ENCODE measurements at regions of chr3 and their contacts with region 1.

Region 1: DNA sequence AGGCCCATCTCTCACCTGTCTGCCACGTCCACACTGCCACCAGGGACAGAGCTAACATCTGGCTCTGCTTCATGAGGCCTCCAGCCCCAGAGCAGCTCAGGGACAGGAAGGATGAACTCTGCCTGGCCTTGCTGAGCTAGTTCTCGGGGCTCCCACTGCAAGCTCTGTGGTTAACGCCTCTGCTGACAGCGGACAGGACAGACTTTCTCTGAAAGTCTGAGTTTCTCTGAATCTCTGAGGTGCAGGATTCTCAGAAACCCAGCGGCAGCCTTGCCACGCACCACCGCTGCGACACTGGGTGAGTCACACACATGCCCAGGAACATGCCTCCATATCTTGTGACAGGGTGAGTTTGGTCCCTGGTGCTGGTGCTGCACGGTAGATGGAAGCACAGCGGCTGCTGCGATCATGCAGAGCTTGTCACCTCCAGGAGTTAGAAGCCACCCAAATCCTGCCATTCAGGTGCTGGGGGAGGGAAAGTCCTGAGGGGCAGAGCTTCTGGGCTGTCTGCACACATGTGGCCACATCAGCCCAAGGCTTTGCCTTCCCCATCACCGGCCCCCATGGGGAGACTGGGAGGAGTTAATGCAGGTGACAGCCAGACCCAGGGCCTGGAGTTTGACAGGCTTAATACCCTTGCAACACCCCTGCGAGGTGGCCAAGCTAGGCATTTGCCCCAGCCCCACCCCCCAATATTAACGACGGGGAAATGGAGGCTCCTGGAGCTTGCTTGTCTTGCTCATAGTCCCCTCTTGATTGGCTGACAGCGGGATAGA is 267.0 kb downstream of the PLCL2 start:
- DNase-seq: peak; percentile 91
- H3K4me3 Mint-ChIP-seq: peak overlapping the region; percentile 49
- H3K27ac Mint-ChIP-seq: peak overlapping the region; percentile 91
- H3K4me1 Mint-ChIP-seq: peaks cover 66% of the 10 kb centered on the region
- H3K27me3 Mint-ChIP-seq: no peaks in the 10 kb centered on the region

Region 2: DNA sequence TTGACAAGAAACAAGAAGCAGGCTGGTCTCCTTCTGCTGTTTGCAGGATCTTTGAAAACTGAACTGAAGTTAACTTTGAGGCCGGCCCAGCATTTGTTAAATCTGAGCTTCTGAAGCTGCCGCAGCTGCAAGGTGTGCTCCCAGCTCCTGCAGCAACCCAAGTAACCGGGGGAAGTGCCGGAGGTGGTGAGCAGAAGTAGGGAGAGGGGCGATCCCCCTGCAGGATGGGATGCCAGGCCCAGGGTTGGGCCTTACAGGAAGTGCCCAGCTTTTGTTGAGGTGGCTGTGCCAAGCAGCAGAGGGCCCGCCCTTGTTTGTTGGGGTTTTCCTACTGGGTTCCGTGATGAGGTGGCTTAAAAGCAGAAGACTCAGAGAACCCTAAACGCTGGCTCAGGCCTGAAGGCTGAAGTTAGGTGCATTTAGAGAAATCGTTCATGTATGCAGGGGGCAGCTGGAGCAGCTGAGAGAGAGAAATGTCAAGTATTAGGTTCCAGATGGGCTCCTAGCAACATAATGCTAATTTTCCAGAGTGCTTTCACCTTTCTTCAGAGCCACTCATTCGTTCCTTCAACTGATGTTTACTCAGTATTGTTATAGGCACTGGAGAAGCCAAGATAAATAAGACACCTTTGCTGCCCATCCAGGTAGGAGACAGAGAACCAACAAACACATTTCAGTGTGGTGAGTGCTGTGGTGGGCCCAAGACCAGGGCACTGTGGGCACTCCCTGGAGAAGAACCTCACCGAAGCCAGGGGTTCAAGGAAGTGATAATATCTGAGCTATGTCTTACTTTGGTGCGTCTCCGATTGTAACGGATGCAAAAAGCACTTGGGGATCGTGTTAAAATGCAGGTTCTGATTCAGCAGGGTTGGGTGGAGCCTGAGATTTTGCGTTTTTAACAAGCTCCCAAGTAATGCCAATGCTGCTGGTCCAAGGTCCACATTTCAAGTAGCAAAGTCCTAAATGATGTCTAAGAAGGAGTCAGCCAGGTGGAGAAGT is 309.2 kb before region 1 on chr3:
- intact Hi-C with region 1: loop called (anchors 5 kb)
- DNase-seq: peak; percentile 71
- H3K4me3 Mint-ChIP-seq: peak overlapping the region; percentile 75
- H3K27ac Mint-ChIP-seq: peak overlapping the region; percentile 94
- H3K4me1 Mint-ChIP-seq: peaks cover 60% of the 10 kb centered on the region
- H3K27me3 Mint-ChIP-seq: peaks cover 4% of the 10 kb centered on the region

Region 3: DNA sequence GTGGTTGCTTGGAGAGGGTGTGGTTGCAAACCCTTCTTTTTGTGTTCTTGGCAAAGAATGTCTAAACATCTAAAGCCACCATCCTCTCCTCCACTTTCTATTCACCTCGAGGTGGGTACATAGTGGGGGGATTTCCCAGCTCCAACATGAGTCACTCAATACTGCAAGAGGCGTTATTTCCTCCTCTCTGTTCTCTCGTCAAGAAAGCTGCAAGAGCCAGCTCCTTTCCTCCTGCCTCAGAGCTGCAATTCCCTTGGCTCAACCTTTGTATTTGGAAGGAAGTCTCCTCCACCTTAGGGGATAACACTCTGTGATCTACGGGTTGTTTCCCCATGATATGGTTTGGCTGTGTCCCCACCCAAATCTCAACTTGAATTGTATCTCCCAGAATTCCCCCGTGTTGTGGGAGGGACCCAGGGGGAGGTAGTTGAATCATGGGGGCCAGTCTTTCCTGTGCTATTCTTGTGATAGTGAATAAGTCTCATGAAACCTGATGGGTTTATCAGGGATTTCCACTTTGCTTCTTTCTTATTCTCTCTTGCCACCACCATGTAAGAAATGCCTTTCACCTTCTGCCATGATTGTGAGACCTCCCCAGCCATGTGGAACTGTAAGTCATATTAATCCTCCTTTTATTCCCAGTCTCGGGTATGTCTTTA is 128.7 kb before region 1 on chr3:
- intact Hi-C with region 1: loop called (anchors 5 kb)
- DNase-seq: peak; percentile 24
- H3K4me3 Mint-ChIP-seq: peak overlapping the region; percentile 56
- H3K27ac Mint-ChIP-seq: peak overlapping the region; percentile 73
- H3K4me1 Mint-ChIP-seq: peaks cover 51% of the 10 kb centered on the region
- H3K27me3 Mint-ChIP-seq: no peaks in the 10 kb centered on the region

Region 4: DNA sequence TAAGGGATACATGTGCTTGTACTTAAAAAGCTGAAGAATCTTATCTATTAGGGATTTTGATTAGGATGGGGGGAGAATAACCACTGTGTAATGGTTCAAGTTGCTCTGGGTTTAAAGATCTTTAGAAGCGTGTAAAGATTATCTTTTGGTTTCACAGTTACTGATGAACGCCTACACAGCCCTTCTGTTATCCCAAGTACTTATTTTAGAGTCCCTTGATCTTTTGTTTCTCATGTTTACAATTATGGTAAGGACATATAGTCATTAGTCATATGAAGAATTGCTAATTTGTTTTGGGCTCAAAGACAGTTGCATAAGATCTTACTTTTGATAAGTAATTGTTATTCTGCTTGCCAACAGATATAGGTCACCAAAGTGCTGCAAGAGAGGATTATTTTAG is 106.9 kb before region 1 on chr3:
- intact Hi-C with region 1: loop called (anchors 1 kb)
- DNase-seq: no peak
- H3K4me3 Mint-ChIP-seq: no peak overlapping the region
- H3K27ac Mint-ChIP-seq: peak overlapping the region; percentile 20
- H3K4me1 Mint-ChIP-seq: peaks cover 54% of the 10 kb centered on the region
- H3K27me3 Mint-ChIP-seq: no peaks in the 10 kb centered on the region

Region 5: DNA sequence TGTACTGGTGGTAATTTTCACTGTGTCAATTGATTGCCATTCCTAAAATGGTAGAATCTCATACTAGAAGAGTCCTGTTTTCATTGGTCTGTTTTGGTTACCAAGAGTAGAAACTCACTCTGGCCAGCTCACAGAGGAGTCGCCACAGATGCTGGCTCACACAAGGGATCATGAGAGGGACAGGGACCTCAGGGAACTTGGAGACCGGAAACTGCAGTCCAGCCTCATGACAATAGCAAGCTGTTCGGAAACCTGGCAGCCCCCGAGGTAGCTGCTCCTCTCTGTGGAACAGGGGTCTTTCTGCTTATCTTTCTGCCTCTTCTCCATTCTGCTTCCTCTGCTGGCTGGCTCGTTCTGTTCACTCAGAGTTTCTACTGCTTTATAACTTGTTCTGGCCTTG is 74.2 kb before region 1 on chr3:
- intact Hi-C with region 1: loop called (anchors 2 kb)
- DNase-seq: no peak
- H3K4me3 Mint-ChIP-seq: no peak overlapping the region
- H3K27ac Mint-ChIP-seq: peak overlapping the region; percentile 29
- H3K4me1 Mint-ChIP-seq: peaks cover 61% of the 10 kb centered on the region
- H3K27me3 Mint-ChIP-seq: no peaks in the 10 kb centered on the region

Region 6: GRCh38 chr3:17119201-17120077 is 32.3 kb before region 1 on chr3:
- intact Hi-C with region 1: no loop called
- DNase-seq: no peak
- H3K4me3 Mint-ChIP-seq: no peak overlapping the region
- H3K27ac Mint-ChIP-seq: no peak overlapping the region
- H3K4me1 Mint-ChIP-seq: no peaks in the 10 kb centered on the region
- H3K27me3 Mint-ChIP-seq: no peaks in the 10 kb centered on the region

Region 7: DNA sequence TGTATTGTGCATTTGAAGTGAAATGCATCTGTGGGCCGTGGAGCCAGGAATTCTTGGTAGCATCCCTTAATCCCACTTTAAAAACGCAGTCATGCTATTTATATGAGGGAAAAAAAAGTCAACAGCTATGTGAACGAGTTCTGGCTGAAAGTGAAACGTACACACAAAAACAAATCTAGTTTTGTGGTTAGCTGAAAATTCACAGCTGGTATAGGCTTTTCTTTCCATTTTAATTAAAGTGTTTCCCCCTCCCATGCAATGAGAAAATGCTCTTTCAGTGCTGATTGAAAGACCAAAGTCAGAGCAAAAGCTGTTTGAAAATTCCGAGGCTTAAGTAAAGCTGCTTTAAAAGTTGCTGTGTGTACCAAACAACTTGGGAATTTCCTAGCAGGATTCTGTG is 30.4 kb after region 1 on chr3:
- intact Hi-C with region 1: loop called (anchors 1 kb)
- DNase-seq: no peak
- H3K4me3 Mint-ChIP-seq: peak overlapping the region; percentile 54
- H3K27ac Mint-ChIP-seq: peak overlapping the region; percentile 38
- H3K4me1 Mint-ChIP-seq: peaks cover 30% of the 10 kb centered on the region
- H3K27me3 Mint-ChIP-seq: no peaks in the 10 kb centered on the region

Region 8: DNA sequence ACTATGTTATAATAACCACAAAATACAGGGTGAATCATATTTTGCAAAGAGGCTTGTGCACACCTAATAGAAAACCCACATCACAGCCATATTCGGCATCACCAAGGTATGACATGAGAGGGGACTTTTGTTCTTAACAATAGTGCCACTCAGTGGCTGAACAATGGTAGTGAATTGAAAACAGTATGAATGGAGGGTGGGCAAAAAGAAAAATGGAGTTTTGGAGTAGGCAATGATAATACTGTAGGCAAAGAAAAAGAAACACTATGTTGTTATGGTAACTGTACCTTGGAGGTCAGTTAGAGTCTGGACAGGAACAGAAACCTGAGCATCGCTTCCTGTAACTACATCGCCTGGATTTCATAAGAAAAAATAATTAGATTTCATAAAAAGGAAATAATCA is 81.6 kb after region 1 on chr3:
- intact Hi-C with region 1: no loop called
- DNase-seq: peak; percentile 27
- H3K4me3 Mint-ChIP-seq: no peak overlapping the region
- H3K27ac Mint-ChIP-seq: no peak overlapping the region
- H3K4me1 Mint-ChIP-seq: peaks cover 18% of the 10 kb centered on the region
- H3K27me3 Mint-ChIP-seq: no peaks in the 10 kb centered on the region

Region 9: GRCh38 chr3:17384567-17385296 is 232.9 kb after region 1 on chr3:
- intact Hi-C with region 1: no loop called
- DNase-seq: no peak
- H3K4me3 Mint-ChIP-seq: no peak overlapping the region
- H3K27ac Mint-ChIP-seq: no peak overlapping the region
- H3K4me1 Mint-ChIP-seq: no peaks in the 10 kb centered on the region
- H3K27me3 Mint-ChIP-seq: no peaks in the 10 kb centered on the region

Region 10: GRCh38 chr3:17431004-17431403 is 279.2 kb after region 1 on chr3:
- intact Hi-C with region 1: no loop called
- DNase-seq: no peak
- H3K4me3 Mint-ChIP-seq: no peak overlapping the region
- H3K27ac Mint-ChIP-seq: no peak overlapping the region
- H3K4me1 Mint-ChIP-seq: no peaks in the 10 kb centered on the region
- H3K27me3 Mint-ChIP-seq: no peaks in the 10 kb centered on the region

Measured in activated T-helper 2 cell treated with anti-CD3 and anti-CD28 coated beads, Interferon-gamma antibody, Interleukin-2, Interleukin-4, amounts not matched to agents 10 μg/mL and 5 μg/mL and 100 μg/mL, durations not matched to agents 14 hours and 24 hours and 36 hours (primary cell).